Activated naive CD8-positive, alpha-beta T cell treated with anti-CD3 and anti-CD28 coated beads, Interleukin-2, amount 10 ng/mL, durations not matched to agents 7 days and 5 days (primary cell): ENCODE measurements at regions of chr3 and their contacts with region 1.

Region 1: GRCh38 chr3:52253314-52254304 is 8.1 kb downstream of the PPM1M start:
- DNase-seq: peak; percentile 77
- ATAC-seq: peak; percentile 84
- H3K4me3 Mint-ChIP-seq: peak overlapping the region; percentile 86
- H3K27ac Mint-ChIP-seq: peak overlapping the region; percentile 99
- H3K4me1 Mint-ChIP-seq: peaks cover 80% of the 10 kb centered on the region
- H3K27me3 Mint-ChIP-seq: no peaks in the 10 kb centered on the region

Region 2: DNA sequence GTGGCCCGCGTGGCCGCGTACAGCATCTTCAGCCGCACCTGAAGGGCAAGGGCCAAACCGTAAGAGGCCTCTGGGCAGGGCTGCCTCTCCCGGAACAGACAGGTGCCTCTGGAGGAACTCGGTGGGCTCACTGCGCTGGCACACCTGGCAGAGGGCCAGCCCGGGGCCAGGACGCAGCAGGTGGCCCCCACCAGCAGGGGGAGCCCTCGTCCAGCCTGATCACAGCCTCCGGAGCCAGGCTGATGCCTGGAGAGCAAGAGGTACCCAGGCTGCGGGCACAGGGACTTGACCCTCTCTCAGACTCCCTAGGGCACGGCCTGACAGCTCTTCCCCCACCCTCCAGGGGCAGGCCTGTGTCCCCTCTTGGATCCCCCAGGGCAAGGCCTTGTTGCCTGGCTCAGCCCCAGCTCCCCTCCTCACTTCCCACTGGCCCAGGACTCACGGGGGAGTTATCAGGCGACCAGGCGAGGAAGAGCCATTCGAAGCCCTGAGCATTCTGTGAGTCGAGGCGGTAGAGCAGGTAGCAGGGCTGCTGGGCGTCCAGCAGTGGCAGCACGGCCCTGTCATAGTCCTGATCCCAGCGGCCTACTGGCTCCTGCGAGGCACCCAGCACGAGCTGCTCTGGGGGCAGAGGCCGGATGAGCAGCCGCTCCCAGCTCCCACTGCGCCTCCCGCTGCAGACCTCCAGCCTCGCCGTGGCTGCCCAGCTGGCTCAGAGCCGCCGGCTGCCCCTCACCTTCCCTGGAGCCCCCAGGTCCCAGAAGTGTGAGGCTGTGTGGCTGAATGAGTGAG is 21.9 kb before region 1 on chr3:
- POLR2A ChIA-PET with region 1: interaction called, 158 read pairs
- DNase-seq: peak; percentile 94
- ATAC-seq: peak; percentile 78
- H3K4me3 Mint-ChIP-seq: peak overlapping the region; percentile 52
- H3K27ac Mint-ChIP-seq: peak overlapping the region; percentile 75
- H3K4me1 Mint-ChIP-seq: peaks cover 44% of the 10 kb centered on the region
- H3K27me3 Mint-ChIP-seq: no peaks in the 10 kb centered on the region

Region 3: DNA sequence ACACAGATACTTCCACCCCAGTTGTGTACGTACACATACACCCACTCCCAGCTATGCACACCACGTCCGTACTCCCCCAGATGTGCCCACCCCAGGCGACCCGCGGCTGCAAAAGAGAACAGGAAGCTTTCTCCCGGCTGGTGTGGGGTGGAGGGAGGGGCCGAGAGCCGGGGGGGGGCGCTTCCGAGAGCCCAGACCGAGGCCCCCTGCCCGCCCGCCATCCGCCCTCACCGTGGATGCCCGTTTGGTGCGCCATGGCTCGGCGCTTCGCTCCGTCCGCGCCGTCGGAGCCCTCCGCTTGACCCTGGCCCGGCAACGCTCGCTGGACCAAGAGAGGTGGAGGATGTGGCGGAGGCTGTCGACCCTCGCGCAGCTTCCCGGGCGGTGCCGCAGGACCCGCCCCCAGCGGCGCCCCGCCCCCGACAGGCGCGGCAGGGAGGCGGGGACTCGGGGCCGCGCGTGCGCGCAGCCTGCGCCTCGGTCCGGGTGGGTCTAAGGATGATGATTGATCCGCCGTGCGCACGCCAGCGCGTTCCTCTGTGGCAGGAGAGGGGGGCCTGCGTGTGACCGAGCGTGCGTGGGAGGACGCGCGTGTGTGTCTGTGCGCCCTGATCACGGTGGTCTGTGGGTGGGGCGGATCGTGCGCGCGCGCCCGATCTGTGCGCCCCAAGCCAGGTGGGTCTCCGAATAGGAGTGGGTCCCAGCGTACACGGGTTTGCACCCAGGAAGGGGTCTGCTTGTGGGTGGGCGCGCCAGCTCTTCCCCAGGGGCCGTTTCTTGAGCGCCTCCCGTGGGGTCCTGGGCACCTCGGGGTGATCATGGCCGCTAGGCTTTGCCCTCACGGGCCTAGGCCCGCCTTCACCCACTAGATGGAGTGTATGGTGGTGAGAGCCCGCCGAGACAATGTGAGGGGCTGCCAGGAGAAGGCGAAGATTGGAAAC is 14.6 kb before region 1 on chr3 and contains the start of gene TWF2:
- POLR2A ChIA-PET with region 1: interaction called, 158 read pairs
- DNase-seq: peak; percentile 98
- ATAC-seq: peak; percentile 72
- H3K4me3 Mint-ChIP-seq: peak within 1 kb of the TSS; percentile 99
- H3K27ac Mint-ChIP-seq: peak within 1 kb of the TSS; percentile 96
- H3K4me1 Mint-ChIP-seq: peaks cover 57% of the 10 kb centered on the region
- H3K27me3 Mint-ChIP-seq: no peaks in the 10 kb centered on the region
- total RNA-seq, gene TWF2: 118 to 122 TPM

Region 4: GRCh38 chr3:52317208-52318000 is 63.8 kb after region 1 on chr3:
- POLR2A ChIA-PET with region 1: no interaction called
- DNase-seq: peak; percentile 80
- ATAC-seq: peak; percentile 93
- H3K4me3 Mint-ChIP-seq: peak overlapping the region; percentile 63
- H3K27ac Mint-ChIP-seq: no peak overlapping the region
- H3K4me1 Mint-ChIP-seq: peaks cover 10% of the 10 kb centered on the region
- H3K27me3 Mint-ChIP-seq: no peaks in the 10 kb centered on the region